WTC11 (cell line): ENCODE measurements at regions of chr10 and their contacts with region 1.

Region 1: DNA sequence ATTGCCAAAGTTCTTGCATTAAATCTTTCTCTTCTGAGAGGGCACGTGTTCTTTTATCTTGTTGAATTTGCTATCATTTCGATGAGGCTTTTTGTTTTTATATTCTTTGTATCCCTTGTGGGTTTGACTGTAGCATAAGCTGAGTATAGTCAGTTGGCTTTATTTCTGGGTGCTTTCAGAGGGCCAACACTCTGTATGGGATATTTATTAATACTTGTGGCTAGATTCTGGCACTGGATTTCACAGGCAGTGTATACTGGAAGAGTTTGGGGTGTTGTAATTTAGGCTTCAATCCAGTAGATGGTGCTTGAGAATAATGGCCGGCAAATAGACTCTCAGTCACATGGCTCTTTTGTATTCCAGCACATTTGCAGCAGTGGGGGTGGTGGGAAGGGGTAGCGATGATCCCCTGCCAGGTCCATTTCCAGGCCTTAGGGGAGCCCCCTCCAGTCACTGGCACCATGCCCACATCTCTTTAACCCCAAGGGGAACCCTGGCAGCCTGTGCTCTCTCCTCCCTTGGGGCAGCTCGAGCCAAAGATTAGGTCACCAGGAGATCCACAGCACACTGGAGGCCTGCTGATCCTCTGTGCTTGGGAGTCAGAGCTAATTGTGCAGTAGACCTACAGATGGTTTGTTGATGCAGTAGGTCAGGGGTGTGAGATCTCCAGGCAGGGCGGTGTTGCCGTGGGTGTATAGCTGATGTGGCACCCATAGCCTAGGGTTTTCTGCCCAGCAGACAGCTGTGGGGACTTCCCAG is 81.8 kb downstream of the PTPN20 start:
- DNase-seq: no peak
- ATAC-seq: peak; percentile 93
- H3K4me3 Mint-ChIP-seq: no peak overlapping the region
- H3K27ac Mint-ChIP-seq: no peak overlapping the region
- H3K4me1 Mint-ChIP-seq: peaks cover 23% of the 10 kb centered on the region
- H3K27me3 Mint-ChIP-seq: no peaks in the 10 kb centered on the region
- CTCF ChIP-seq: no peak

Region 2: GRCh38 chr10:47013507-47014154 is 20.6 kb after region 1 on chr10:
- CTCF ChIA-PET with region 1: interaction called, 33 read pairs
- POLR2A ChIA-PET with region 1: no interaction called
- DNase-seq: peak; percentile 53
- ATAC-seq: peak; percentile 92
- H3K4me3 Mint-ChIP-seq: no peak overlapping the region
- H3K27ac Mint-ChIP-seq: no peak overlapping the region
- H3K4me1 Mint-ChIP-seq: no peaks in the 10 kb centered on the region
- H3K27me3 Mint-ChIP-seq: no peaks in the 10 kb centered on the region
- CTCF ChIP-seq: no peak

Region 3: GRCh38 chr10:47311932-47312662 is 319.1 kb after region 1 on chr10:
- CTCF ChIA-PET with region 1: interaction called, 14 read pairs
- POLR2A ChIA-PET with region 1: no interaction called
- DNase-seq: peak; percentile 89
- ATAC-seq: peak; percentile 87
- H3K4me3 Mint-ChIP-seq: no peak overlapping the region
- H3K27ac Mint-ChIP-seq: no peak overlapping the region
- H3K4me1 Mint-ChIP-seq: peaks cover 25% of the 10 kb centered on the region
- H3K27me3 Mint-ChIP-seq: no peaks in the 10 kb centered on the region
- CTCF ChIP-seq: peak; percentile 62; the same call in 1 of the 2 replicates